CD8-positive, alpha-beta T cell (primary cell): ENCODE measurements at regions of chr15 and their contacts with region 1.

Region 1: DNA sequence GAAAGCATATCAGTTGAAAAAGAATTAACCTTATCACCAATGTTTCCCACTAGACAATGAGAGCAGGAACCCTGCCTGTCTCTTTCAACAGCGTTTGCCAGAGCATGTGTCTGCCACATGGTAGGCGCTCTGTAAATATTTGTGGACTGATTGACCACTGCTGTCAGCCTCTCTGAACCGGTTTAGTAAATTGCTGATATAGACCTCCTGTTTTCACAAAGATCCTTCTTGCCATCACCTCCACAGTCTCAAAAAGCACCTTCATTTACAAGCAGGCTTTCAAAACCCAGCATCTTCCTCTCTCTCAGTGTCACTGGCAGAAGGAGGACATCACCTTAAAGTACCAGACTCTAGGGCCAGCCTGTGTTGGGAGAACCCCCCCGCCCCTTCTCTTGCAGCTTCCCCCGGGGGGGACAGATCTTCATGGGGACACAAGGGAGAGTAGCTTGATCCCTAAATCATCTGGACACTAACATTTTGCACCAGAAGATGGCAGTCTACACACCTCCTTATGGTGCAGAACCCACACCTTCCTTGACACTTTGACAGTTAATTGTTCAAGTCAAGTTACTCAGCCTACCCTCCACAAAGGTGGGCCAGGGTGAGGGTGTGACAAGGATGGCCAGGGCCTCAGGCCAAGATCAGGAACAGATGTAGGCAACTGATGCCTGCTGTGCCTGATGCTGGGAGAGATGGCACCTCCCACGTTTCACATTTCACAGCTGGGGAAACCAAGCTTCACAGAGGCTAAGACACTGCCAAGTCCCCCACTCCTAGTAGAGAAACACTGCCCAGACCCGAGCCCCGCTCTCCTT is 37.8 kb upstream of the USP3 start:
- DNase-seq: peak in 7 of 9 experiments; percentile 41 to 88 (median 61)
- ATAC-seq: peak; percentile 90
- H3K4me3 ChIP-seq: no peak overlapping the region
- H3K4me3 Mint-ChIP-seq: no peak overlapping the region
- H3K27ac ChIP-seq: no peak overlapping the region
- H3K27ac Mint-ChIP-seq: peak overlapping the region; percentile 9
- H3K4me1 ChIP-seq: peaks cover 8% of the 10 kb centered on the region
- H3K4me1 Mint-ChIP-seq: peaks cover 21% of the 10 kb centered on the region
- H3K27me3 ChIP-seq: no peaks in the 10 kb centered on the region
- H3K27me3 Mint-ChIP-seq: no peaks in the 10 kb centered on the region
- CTCF ChIP-seq: peak; percentile 66

Region 2: GRCh38 chr15:63288778-63289378 is 177.7 kb before region 1 on chr15:
- CTCF ChIA-PET with region 1: interaction called, 4 read pairs
- POLR2A ChIA-PET with region 1: no interaction called
- intact Hi-C with region 1: loop called in 1 of 2 experiments (anchors 2 kb)
- DNase-seq: peak in 2 of 9 experiments; percentile 57 to 72
- ATAC-seq: peak; percentile 75
- H3K4me3 ChIP-seq: no peak overlapping the region
- H3K4me3 Mint-ChIP-seq: no peak overlapping the region
- H3K27ac ChIP-seq: peak overlapping the region in 1 of 2 experiments; percentile 0
- H3K27ac Mint-ChIP-seq: no peak overlapping the region
- H3K4me1 ChIP-seq: peaks cover 7% of the 10 kb centered on the region
- H3K4me1 Mint-ChIP-seq: peaks cover 7% of the 10 kb centered on the region
- H3K27me3 ChIP-seq: no peaks in the 10 kb centered on the region
- H3K27me3 Mint-ChIP-seq: no peaks in the 10 kb centered on the region
- CTCF ChIP-seq: peak; percentile 81

Region 3: GRCh38 chr15:63348392-63348791 is 118.2 kb before region 1 on chr15:
- CTCF ChIA-PET with region 1: no interaction called
- POLR2A ChIA-PET with region 1: no interaction called
- intact Hi-C with region 1: no loop called
- DNase-seq: no peak
- ATAC-seq: no peak
- H3K4me3 ChIP-seq: no peak overlapping the region
- H3K4me3 Mint-ChIP-seq: no peak overlapping the region
- H3K27ac ChIP-seq: no peak overlapping the region
- H3K27ac Mint-ChIP-seq: no peak overlapping the region
- H3K4me1 ChIP-seq: no peaks in the 10 kb centered on the region
- H3K4me1 Mint-ChIP-seq: no peaks in the 10 kb centered on the region
- H3K27me3 ChIP-seq: no peaks in the 10 kb centered on the region
- H3K27me3 Mint-ChIP-seq: peaks cover 4% of the 10 kb centered on the region
- CTCF ChIP-seq: no peak

Region 4: GRCh38 chr15:63481105-63481810 is 14.7 kb after region 1 on chr15:
- CTCF ChIA-PET with region 1: interaction called, 29 read pairs
- POLR2A ChIA-PET with region 1: interaction called, 3 read pairs
- intact Hi-C with region 1: loop called in 1 of 2 experiments (anchors 1 kb)
- DNase-seq: peak in 1 of 9 experiments; percentile 46
- ATAC-seq: no peak
- H3K4me3 ChIP-seq: no peak overlapping the region
- H3K4me3 Mint-ChIP-seq: peak overlapping the region; percentile 15
- H3K27ac ChIP-seq: peak overlapping the region in 1 of 2 experiments; percentile 78
- H3K27ac Mint-ChIP-seq: peak overlapping the region; percentile 99
- H3K4me1 ChIP-seq: peaks cover 73% of the 10 kb centered on the region
- H3K4me1 Mint-ChIP-seq: peaks cover 76% of the 10 kb centered on the region
- H3K27me3 ChIP-seq: no peaks in the 10 kb centered on the region
- H3K27me3 Mint-ChIP-seq: no peaks in the 10 kb centered on the region
- CTCF ChIP-seq: no peak

Region 5: GRCh38 chr15:63504247-63504978 is 37.8 kb after region 1 on chr15 and contains the start of gene USP3:
- CTCF ChIA-PET with region 1: interaction called, 58 read pairs
- POLR2A ChIA-PET with region 1: interaction called, 15 read pairs
- intact Hi-C with region 1: loop called (anchors 1 to 2 kb)
- DNase-seq: peak; percentile 88 to 96 (median 92)
- ATAC-seq: peak; percentile 72
- H3K4me3 ChIP-seq: peak within 1 kb of the TSS; percentile 81 to 86
- H3K4me3 Mint-ChIP-seq: peak within 1 kb of the TSS; percentile 98
- H3K27ac ChIP-seq: peak within 1 kb of the TSS; percentile 94 to 99
- H3K27ac Mint-ChIP-seq: peak within 1 kb of the TSS; percentile 100
- H3K4me1 ChIP-seq: peaks cover 77% of the 10 kb centered on the region
- H3K4me1 Mint-ChIP-seq: peaks cover 78% of the 10 kb centered on the region
- H3K27me3 ChIP-seq: no peaks in the 10 kb centered on the region
- H3K27me3 Mint-ChIP-seq: no peaks in the 10 kb centered on the region
- CTCF ChIP-seq: no peak
- total RNA-seq, gene USP3: 264 to 275 TPM

Region 6: GRCh38 chr15:63553388-63553791 is 86.8 kb after region 1 on chr15:
- CTCF ChIA-PET with region 1: interaction called, 17 read pairs
- POLR2A ChIA-PET with region 1: interaction called, 4 read pairs
- intact Hi-C with region 1: loop called in 1 of 2 experiments (anchors 5 kb)
- DNase-seq: peak in 1 of 9 experiments; percentile 35
- ATAC-seq: no peak
- H3K4me3 ChIP-seq: no peak overlapping the region
- H3K4me3 Mint-ChIP-seq: no peak overlapping the region
- H3K27ac ChIP-seq: peak overlapping the region in 1 of 2 experiments; percentile 22
- H3K27ac Mint-ChIP-seq: no peak overlapping the region
- H3K4me1 ChIP-seq: peaks cover 6% of the 10 kb centered on the region
- H3K4me1 Mint-ChIP-seq: peaks cover 46% of the 10 kb centered on the region
- H3K27me3 ChIP-seq: no peaks in the 10 kb centered on the region
- H3K27me3 Mint-ChIP-seq: no peaks in the 10 kb centered on the region
- CTCF ChIP-seq: no peak

Region 7: GRCh38 chr15:63582718-63583426 is 116.3 kb after region 1 on chr15:
- CTCF ChIA-PET with region 1: interaction called, 13 read pairs
- POLR2A ChIA-PET with region 1: no interaction called
- intact Hi-C with region 1: no loop called
- DNase-seq: no peak
- ATAC-seq: no peak
- H3K4me3 ChIP-seq: no peak overlapping the region
- H3K4me3 Mint-ChIP-seq: no peak overlapping the region
- H3K27ac ChIP-seq: no peak overlapping the region
- H3K27ac Mint-ChIP-seq: peak overlapping the region; percentile 63
- H3K4me1 ChIP-seq: no peaks in the 10 kb centered on the region
- H3K4me1 Mint-ChIP-seq: peaks cover 11% of the 10 kb centered on the region
- H3K27me3 ChIP-seq: no peaks in the 10 kb centered on the region
- H3K27me3 Mint-ChIP-seq: no peaks in the 10 kb centered on the region
- CTCF ChIP-seq: no peak

Region 8: GRCh38 chr15:64153480-64154367 is 687.1 kb after region 1 on chr15:
- CTCF ChIA-PET with region 1: no interaction called
- POLR2A ChIA-PET with region 1: no interaction called
- intact Hi-C with region 1: loop called in 1 of 2 experiments (anchors 10 kb)
- DNase-seq: peak; percentile 85 to 96 (median 90)
- ATAC-seq: peak; percentile 96
- H3K4me3 ChIP-seq: no peak overlapping the region
- H3K4me3 Mint-ChIP-seq: peak overlapping the region; percentile 70
- H3K27ac ChIP-seq: no peak overlapping the region
- H3K27ac Mint-ChIP-seq: peak overlapping the region; percentile 56
- H3K4me1 ChIP-seq: peaks cover 33% of the 10 kb centered on the region
- H3K4me1 Mint-ChIP-seq: peaks cover 37% of the 10 kb centered on the region
- H3K27me3 ChIP-seq: peaks cover 14 to 20% of the 10 kb centered on the region in 2 experiments
- H3K27me3 Mint-ChIP-seq: peaks cover 3% of the 10 kb centered on the region
- CTCF ChIP-seq: peak; percentile 78